Activated CD4-positive, alpha-beta T cell treated with anti-CD3 and anti-CD28 coated beads, Interleukin-2, amount 10 ng/mL, durations not matched to agents 7 days and 5 days (primary cell): ENCODE measurements at regions of chr17 and their contacts with region 1.

Region 1: DNA sequence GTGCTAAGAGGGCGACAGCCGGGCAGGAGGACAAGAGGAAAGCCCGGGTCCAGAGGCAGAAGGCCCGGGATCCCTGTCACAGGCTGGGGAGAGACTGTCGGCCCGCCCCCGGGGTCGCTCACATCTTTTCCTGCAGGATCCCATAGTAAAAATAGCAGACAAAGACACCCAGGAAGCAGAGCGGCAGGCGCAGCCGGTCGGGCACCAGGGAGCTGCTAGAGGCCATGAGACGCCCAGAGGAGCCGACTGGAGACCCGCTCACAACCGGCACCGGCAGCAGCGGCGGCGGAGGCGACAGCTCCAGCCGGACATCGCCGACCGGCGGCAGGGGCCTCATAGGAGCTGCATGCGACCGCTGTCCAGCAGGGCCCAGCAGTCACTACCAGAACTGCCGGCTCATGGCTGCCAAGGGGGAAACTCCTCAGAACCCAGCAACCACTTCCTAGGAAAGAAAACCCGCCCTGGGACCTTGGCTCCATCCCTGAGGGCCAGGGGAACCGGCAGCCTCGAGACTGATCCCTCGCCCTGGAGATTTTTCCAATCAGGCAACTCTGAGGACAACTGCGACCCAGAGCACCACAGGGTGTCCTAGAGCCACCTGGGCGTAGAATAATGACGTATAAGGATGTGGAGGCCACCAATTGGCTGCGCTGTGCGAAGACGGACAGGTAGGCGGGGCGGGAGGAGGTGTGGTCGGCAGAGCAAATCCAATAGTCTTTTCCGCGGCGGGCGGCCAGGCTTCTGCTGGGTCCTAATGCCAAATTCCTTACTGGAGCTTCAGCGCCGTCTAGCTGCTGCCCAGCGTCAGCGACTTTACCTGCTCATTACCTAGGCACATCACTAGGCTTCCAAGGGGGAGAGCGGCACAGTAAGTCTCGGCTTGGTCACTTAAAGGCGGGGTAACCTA is at the start of gene SLC35B1:
- DNase-seq: peak; percentile 99
- H3K4me3 Mint-ChIP-seq: peak within 1 kb of the TSS; percentile 91
- H3K27ac Mint-ChIP-seq: peak within 1 kb of the TSS; percentile 98
- H3K4me1 Mint-ChIP-seq: peaks cover 56% of the 10 kb centered on the region
- H3K27me3 Mint-ChIP-seq: no peaks in the 10 kb centered on the region
- total RNA-seq, gene SLC35B1: 55.8 to 70.1 TPM

Region 2: GRCh38 chr17:49556223-49556971 is 151.5 kb before region 1 on chr17:
- CTCF ChIA-PET with region 1: interaction called, 10 read pairs
- POLR2A ChIA-PET with region 1: no interaction called
- DNase-seq: peak; percentile 82
- H3K4me3 Mint-ChIP-seq: no peak overlapping the region
- H3K27ac Mint-ChIP-seq: no peak overlapping the region
- H3K4me1 Mint-ChIP-seq: no peaks in the 10 kb centered on the region
- H3K27me3 Mint-ChIP-seq: peaks cover 2% of the 10 kb centered on the region

Region 3: GRCh38 chr17:49567871-49568694 is 139.8 kb before region 1 on chr17:
- CTCF ChIA-PET with region 1: interaction called, 116 read pairs
- POLR2A ChIA-PET with region 1: no interaction called
- DNase-seq: peak; percentile 83
- H3K4me3 Mint-ChIP-seq: peak overlapping the region; percentile 37
- H3K27ac Mint-ChIP-seq: no peak overlapping the region
- H3K4me1 Mint-ChIP-seq: peaks cover 31% of the 10 kb centered on the region
- H3K27me3 Mint-ChIP-seq: peaks cover 32% of the 10 kb centered on the region

Region 4: DNA sequence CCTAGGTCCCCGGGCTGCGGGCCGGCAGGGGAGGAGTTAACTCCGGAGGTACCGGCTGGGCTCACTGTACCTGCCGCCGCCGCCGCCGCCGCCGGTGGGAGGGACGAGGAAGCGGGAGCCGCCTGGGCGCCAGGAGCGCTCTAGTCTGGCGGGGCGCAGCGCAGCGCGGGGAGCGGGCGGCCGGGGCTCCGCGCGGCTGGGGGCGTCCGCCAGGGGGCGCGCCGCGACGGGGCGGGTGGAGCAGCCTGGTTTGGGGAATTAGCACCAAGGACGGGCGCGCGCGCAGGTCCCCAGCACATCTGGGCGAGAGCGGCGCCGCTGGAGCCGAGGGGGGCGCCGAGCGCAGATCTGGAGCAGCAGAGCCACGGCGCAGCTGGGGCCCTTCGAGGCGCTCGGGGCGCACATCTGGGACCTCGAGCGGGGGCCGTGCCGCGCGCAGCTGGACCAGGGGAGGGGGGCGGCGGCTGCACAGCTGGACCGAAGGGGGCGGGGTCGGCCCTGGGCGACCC is 132.2 kb before region 1 on chr17 and contains the start of gene NXPH3:
- CTCF ChIA-PET with region 1: interaction called, 116 read pairs
- POLR2A ChIA-PET with region 1: no interaction called
- DNase-seq: peak; percentile 64
- H3K4me3 Mint-ChIP-seq: peak within 1 kb of the TSS; percentile 57
- H3K27ac Mint-ChIP-seq: no peak within 1 kb of the TSS
- H3K4me1 Mint-ChIP-seq: peaks cover 19% of the 10 kb centered on the region
- H3K27me3 Mint-ChIP-seq: peaks cover 62% of the 10 kb centered on the region
- total RNA-seq, gene NXPH3: not detected

Region 5: GRCh38 chr17:49667854-49668253 is 40.0 kb before region 1 on chr17:
- CTCF ChIA-PET with region 1: no interaction called
- POLR2A ChIA-PET with region 1: no interaction called
- DNase-seq: no peak
- H3K4me3 Mint-ChIP-seq: no peak overlapping the region
- H3K27ac Mint-ChIP-seq: no peak overlapping the region
- H3K4me1 Mint-ChIP-seq: peaks cover 31% of the 10 kb centered on the region
- H3K27me3 Mint-ChIP-seq: no peaks in the 10 kb centered on the region

Region 6: GRCh38 chr17:49694847-49695683 is 12.8 kb before region 1 on chr17:
- CTCF ChIA-PET with region 1: interaction called, 27 read pairs
- POLR2A ChIA-PET with region 1: no interaction called
- DNase-seq: peak; percentile 73
- H3K4me3 Mint-ChIP-seq: no peak overlapping the region
- H3K27ac Mint-ChIP-seq: peak overlapping the region; percentile 79
- H3K4me1 Mint-ChIP-seq: peaks cover 42% of the 10 kb centered on the region
- H3K27me3 Mint-ChIP-seq: no peaks in the 10 kb centered on the region

Region 7: DNA sequence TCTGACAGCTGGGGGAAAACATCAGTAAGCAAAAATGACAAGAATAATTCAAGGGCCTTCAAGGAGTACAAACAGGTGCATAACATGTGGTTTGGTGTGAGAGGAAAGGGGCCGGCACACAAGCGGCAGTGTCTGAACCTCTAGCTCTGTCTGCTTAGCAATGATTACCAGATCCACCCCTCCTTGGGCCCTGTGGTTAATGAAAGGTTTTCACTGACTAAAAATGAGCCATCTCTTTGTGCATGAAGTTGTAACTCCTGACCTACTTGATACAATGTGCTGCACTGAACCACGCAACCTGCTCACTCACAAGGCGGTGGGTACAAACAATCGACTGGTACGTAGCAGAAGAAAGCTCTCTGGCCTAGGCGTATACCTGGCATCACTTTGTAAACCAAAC is 40.9 kb after region 1 on chr17:
- CTCF ChIA-PET with region 1: interaction called, 16 read pairs
- POLR2A ChIA-PET with region 1: no interaction called
- DNase-seq: peak; percentile 63
- H3K4me3 Mint-ChIP-seq: peak overlapping the region; percentile 73
- H3K27ac Mint-ChIP-seq: peak overlapping the region; percentile 92
- H3K4me1 Mint-ChIP-seq: peaks cover 75% of the 10 kb centered on the region
- H3K27me3 Mint-ChIP-seq: no peaks in the 10 kb centered on the region

Region 8: GRCh38 chr17:49763735-49764558 is 56.1 kb after region 1 on chr17 and contains the start of gene FAM117A:
- CTCF ChIA-PET with region 1: interaction called, 11 read pairs
- POLR2A ChIA-PET with region 1: interaction called, 3 read pairs
- DNase-seq: peak; percentile 99
- H3K4me3 Mint-ChIP-seq: peak within 1 kb of the TSS; percentile 90
- H3K27ac Mint-ChIP-seq: peak within 1 kb of the TSS; percentile 90
- H3K4me1 Mint-ChIP-seq: peaks cover 48% of the 10 kb centered on the region
- H3K27me3 Mint-ChIP-seq: peaks cover 26% of the 10 kb centered on the region
- total RNA-seq, gene FAM117A: 30.6 to 34.1 TPM

Region 9: DNA sequence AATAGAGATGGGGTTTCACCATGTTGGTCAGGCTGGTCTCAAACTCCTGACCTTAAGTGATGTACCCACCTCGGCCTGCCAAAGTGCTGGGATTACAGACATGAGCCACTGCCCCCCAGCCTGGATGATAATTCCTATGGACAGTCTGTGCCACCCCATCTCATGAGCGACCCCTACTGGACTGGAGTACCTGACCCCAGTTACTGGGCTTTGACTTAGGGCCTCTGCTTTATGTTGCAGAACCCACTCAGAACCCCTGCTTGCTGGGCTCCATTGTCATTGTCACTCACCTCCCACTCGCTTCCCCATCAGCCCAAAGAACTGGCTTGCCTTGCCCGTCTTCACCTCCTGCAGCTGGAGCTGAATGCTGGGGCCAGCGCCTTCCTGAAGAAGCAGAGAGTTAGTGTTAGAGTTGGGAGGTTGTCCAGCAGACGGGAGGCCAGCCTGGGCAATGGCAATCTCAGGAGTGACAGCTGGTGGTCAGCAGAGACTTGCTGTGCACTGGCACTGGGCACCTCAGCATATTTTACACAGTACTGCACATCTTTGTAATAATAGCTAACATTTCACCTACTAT is 136.0 kb after region 1 on chr17:
- CTCF ChIA-PET with region 1: no interaction called
- POLR2A ChIA-PET with region 1: no interaction called
- DNase-seq: peak; percentile 27
- H3K4me3 Mint-ChIP-seq: no peak overlapping the region
- H3K27ac Mint-ChIP-seq: peak overlapping the region; percentile 68
- H3K4me1 Mint-ChIP-seq: peaks cover 20% of the 10 kb centered on the region
- H3K27me3 Mint-ChIP-seq: no peaks in the 10 kb centered on the region